KBM-7 (cell line): ENCODE measurements at regions of chr10 and their contacts with region 1.

Region 1: GRCh38 chr10:93554760-93555432 is 11.6 kb upstream of the FFAR4 start:
- DNase-seq: peak; percentile 90

Region 2: GRCh38 chr10:92592761-92593618 is 961.9 kb before region 1 on chr10 and contains the start of gene KIF11:
- in situ Hi-C with region 1: no loop called
- DNase-seq: peak; percentile 97

Region 3: DNA sequence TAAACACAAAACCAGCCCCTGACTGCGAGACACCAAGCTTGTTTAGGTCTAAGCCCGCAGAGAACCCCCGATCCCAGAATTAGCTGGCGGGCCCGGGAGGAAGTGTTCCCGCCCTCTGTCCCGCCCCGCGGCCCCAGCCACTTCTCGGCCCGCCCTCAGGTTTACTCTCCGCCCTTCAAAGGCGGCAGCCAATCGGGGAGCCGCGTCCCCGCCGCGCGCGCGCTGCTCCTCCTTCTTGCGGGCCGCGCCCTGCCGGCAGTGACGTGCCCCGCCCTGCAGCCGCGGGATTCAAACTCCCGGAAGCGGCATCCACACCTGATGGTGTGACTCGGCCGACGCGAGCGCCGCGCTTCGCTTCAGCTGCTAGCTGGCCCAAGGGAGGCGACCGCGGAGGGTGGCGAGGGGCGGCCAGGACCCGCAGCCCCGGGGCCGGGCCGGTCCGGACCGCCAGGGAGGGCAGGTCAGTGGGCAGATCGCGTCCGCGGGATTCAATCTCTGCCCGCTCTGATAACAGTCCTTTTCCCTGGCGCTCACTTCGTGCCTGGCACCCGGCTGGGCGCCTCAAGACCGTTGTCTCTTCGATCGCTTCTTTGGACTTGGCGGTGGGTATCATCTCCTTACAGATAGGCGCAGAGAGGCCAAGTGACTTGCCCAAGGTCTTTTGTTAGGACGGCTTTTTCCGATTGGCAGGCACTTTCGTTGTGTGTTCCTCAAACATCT is 58.4 kb before region 1 on chr10 and contains the start of gene CEP55:
- in situ Hi-C with region 1: no loop called
- DNase-seq: peak; percentile 97

Region 4: GRCh38 chr10:93672022-93672678 is 117.3 kb after region 1 on chr10:
- in situ Hi-C with region 1: loop called (anchors 10 kb)
- DNase-seq: no peak

Region 5: GRCh38 chr10:94088926-94089381 is 534.1 kb after region 1 on chr10:
- in situ Hi-C with region 1: no loop called
- DNase-seq: no peak